GM10248 (cell line): ENCODE measurements at regions of chr12 and their contacts with region 1.

Region 1: DNA sequence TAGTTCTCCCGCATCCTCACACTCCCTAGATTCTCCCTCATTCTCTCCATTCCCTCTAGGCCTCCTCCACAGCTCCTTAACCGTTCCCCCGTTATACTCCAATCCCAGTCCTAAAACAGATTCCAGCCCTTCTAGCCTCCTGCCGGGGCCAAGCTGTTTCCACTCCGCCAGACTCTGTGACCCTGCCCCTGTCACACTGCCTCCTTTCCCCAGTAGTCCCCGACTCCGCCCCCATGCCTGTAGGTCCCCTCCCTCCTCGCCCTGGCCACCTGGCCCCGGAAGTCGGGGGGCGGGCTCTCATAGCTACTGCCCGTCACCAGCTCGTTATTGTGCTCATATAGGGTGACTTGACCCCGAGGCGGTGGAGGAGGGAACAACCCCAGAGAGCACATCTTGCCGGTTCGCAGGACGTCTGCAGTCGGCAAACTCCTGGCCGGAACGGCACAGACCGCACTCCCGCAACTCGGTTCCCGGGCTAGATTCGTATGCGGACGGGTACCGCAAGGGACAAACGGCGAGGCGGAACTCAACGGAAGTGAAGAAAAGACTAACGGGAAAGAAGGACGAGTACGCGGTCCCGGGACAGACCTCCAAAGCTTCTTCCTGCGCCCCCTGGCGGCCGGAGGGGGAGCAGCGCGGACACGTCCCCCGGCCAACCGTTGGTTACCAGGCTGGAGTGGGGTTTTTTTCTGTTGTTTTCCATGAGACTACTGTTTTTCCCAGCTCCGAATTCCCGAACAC is at the start of gene AAAS:
- DNase-seq: peak; percentile 97
- CTCF ChIP-seq: peak; percentile 98

Region 2: GRCh38 chr12:53159195-53159839 is 161.9 kb before region 1 on chr12:
- CTCF ChIA-PET with region 1: interaction called, 56 read pairs
- POLR2A ChIA-PET with region 1: no interaction called
- DNase-seq: peak; percentile 94
- CTCF ChIP-seq: peak; percentile 100

Region 3: GRCh38 chr12:53251477-53252348 is 69.5 kb before region 1 on chr12:
- CTCF ChIA-PET with region 1: interaction called, 21 read pairs
- POLR2A ChIA-PET with region 1: no interaction called
- DNase-seq: peak; percentile 93
- CTCF ChIP-seq: peak; percentile 67

Region 4: DNA sequence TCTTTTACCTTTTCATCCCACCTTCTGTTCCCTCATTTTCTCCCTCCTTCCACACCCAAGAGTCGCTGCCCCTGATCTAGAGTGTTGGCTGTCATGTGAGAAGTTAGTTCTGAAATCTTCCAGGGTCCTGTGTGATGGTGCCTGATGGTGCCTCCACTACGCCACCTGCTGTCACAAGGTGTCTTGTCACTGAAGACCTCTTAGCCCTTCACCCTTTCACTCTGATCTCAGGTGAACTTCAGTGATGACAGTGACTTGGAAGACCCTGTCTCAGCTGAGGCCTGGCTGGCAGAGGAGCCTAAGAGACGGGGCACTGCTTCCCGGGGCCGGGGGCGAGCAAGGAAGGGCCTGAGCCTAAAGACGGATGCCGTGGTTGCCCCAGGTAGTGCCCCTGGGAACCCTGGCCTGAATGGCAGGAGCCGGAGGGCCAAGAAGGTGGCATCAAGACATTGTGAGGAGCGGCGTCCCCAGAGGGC is 33.5 kb before region 1 on chr12:
- CTCF ChIA-PET with region 1: interaction called, 183 read pairs
- POLR2A ChIA-PET with region 1: no interaction called
- DNase-seq: peak; percentile 80
- CTCF ChIP-seq: peak; percentile 68

Region 5: GRCh38 chr12:53336181-53336681 is 15.0 kb after region 1 on chr12 and contains the start of gene SP7:
- CTCF ChIA-PET with region 1: interaction called, 74 read pairs
- POLR2A ChIA-PET with region 1: no interaction called
- DNase-seq: no peak
- CTCF ChIP-seq: no peak

Region 6: DNA sequence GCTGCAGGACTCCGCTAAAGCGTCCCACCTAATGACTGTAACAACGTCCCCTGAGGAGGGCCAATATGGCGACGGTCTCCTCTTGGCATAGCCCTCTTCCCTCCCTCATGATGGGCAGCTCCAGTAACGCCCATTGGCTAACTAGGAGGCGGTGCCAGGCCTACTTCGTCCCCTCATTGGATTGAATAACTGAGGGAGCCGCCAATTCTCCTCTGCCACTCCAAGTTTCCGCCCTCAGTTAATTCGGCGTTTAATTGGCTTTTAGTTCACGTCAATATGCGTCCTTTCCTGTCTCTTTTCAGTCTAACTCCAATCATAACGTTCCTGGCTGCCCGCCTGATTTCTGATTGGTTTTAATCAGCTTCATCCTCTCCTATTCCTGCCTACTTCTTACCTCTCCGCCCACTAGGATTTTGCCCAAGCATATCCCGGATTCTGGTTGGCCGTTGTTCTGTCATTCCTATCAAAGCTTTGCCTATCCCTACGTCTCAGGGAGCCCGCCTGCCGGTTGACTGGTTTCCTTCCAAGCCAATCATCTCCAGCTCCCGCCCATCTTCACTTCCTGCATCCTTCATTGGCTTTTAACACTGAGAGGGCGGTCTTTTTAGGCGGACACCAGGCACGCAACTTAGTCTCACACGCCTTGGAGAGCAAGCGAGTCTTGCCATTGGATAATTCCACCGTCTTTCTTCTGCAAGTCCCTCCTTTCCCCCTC is 58.3 kb after region 1 on chr12:
- CTCF ChIA-PET with region 1: interaction called, 23 read pairs
- POLR2A ChIA-PET with region 1: interaction called, 7 read pairs
- DNase-seq: peak; percentile 88
- CTCF ChIP-seq: no peak

Region 7: DNA sequence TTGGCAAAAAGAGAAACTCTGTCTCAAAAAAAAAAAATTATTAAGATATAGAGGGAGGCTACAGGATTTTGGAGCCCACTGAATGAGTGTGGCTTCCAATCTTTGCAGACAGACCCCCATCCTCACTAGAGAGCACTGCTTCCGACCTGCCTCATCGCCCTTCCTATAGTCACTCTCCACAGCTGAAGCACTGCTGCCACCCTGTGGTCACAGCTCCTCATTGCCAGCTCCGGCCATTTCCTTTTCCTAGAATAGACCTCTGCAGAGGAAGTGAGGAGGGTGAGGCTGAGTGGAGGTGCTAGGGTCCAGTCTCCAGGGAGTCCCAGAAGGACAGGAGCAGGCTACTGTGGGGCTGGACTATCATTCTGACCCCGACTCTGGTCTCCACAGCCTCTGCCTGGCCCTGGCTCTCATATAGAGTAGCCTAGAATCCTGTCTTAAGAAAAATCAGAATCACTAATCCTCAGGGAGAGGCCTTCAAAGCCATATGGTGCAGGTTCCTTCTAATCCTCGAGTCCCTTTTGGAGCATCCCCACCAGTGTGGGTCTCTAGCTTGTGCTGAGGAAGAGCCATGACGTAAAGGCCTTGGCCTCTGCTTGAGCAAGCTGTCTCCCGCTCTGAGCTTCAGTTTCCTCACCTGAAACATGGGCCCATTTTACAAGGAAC is 187.4 kb after region 1 on chr12:
- CTCF ChIA-PET with region 1: interaction called, 64 read pairs
- POLR2A ChIA-PET with region 1: no interaction called
- DNase-seq: peak; percentile 82
- CTCF ChIP-seq: peak; percentile 99